Activated T-helper 2 cell treated with anti-CD3 and anti-CD28 coated beads, Interferon-gamma antibody, Interleukin-2, Interleukin-4, amounts not matched to agents 10 μg/mL and 5 μg/mL and 100 μg/mL, durations not matched to agents 14 hours and 24 hours and 36 hours (primary cell): ENCODE measurements at regions of chr1 and their contacts with region 1.

Region 1: GRCh38 chr1:29793101-29793546 is 556.8 kb downstream of the PTPRU start:
- DNase-seq: peak; percentile 49
- H3K4me3 Mint-ChIP-seq: no peak overlapping the region
- H3K27ac Mint-ChIP-seq: no peak overlapping the region
- H3K4me1 Mint-ChIP-seq: no peaks in the 10 kb centered on the region
- H3K27me3 Mint-ChIP-seq: no peaks in the 10 kb centered on the region

Region 2: GRCh38 chr1:29849038-29849750 is 56.1 kb after region 1 on chr1:
- intact Hi-C with region 1: loop called (anchors 2 kb)
- DNase-seq: peak; percentile 22
- H3K4me3 Mint-ChIP-seq: no peak overlapping the region
- H3K27ac Mint-ChIP-seq: no peak overlapping the region
- H3K4me1 Mint-ChIP-seq: no peaks in the 10 kb centered on the region
- H3K27me3 Mint-ChIP-seq: no peaks in the 10 kb centered on the region